Endothelial cell of umbilical vein (primary cell): ENCODE measurements at regions of chr2 and their contacts with region 1.

Region 1: DNA sequence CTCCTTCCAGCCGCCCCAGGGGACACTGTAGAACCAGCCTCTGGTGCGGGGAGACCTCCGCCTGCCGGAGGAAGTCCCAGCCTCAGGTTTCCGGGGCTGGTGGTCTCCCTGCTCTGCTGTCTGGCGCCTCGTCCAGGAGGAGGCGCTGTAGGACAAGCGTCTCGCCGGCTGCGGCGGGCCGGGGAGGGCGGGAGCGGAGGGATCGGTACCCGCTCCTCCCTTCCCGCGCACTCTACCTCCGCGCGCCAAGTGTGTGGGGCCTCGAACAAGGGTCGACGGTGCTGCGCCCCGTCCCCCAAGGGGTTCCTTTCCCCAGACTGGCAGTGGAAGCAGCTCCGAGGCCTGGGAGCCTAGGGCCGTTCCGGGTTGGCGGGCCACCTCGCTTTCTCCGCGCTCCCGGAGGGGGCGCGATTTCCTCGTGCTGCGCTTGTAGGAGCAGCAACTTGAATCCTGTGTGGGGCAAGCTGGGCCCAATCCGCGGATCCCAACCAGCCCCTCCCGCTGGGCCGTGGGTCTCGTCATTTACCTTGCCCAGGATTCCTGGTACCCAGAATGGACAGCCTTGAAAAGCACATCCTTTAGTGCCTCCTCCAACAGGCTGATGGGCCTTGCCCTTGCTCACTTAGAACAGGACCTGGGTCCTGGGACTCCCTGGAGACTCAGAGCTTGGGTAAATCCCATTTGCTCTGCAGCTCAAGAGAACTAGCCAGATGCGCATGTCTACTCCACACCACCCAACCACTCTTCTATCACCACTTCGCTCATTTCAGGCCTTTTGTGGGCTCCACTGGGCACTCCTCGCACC is 10.6 kb upstream of the HOXD4 start:
- DNase-seq: peak; percentile 82
- H3K4me3 ChIP-seq: peak overlapping the region; percentile 16 to 51 (median 39)
- H3K27ac ChIP-seq: peak overlapping the region; percentile 56
- H3K4me1 ChIP-seq: peaks cover 30% of the 10 kb centered on the region
- H3K27me3 ChIP-seq: no peaks in the 10 kb centered on the region
- CTCF ChIP-seq: peak; percentile 80 to 83
- POLR2A ChIP-seq: peak; percentile 58

Region 2: GRCh38 chr2:176178038-176178756 is 37.5 kb after region 1 on chr2:
- CTCF ChIA-PET with region 1: interaction called, 14 read pairs
- POLR2A ChIA-PET with region 1: no interaction called
- dilution Hi-C with region 1: no loop called
- intact Hi-C with region 1: loop called (anchors 2 kb)
- DNase-seq: peak; percentile 68
- H3K4me3 ChIP-seq: peak overlapping the region; percentile 33 to 49 (median 48)
- H3K27ac ChIP-seq: peak overlapping the region; percentile 77
- H3K4me1 ChIP-seq: peaks cover 30% of the 10 kb centered on the region
- H3K27me3 ChIP-seq: no peaks in the 10 kb centered on the region
- CTCF ChIP-seq: no peak
- POLR2A ChIP-seq: no peak

Region 3: GRCh38 chr2:176419591-176420071 is 278.9 kb after region 1 on chr2:
- CTCF ChIA-PET with region 1: interaction called, 5 read pairs
- POLR2A ChIA-PET with region 1: no interaction called
- dilution Hi-C with region 1: no loop called
- intact Hi-C with region 1: loop called (anchors 1 kb)
- DNase-seq: peak; percentile 97
- H3K4me3 ChIP-seq: no peak overlapping the region
- H3K27ac ChIP-seq: peak overlapping the region; percentile 92
- H3K4me1 ChIP-seq: peaks cover 42% of the 10 kb centered on the region
- H3K27me3 ChIP-seq: no peaks in the 10 kb centered on the region
- CTCF ChIP-seq: no peak
- POLR2A ChIP-seq: peak; percentile 65

Region 4: DNA sequence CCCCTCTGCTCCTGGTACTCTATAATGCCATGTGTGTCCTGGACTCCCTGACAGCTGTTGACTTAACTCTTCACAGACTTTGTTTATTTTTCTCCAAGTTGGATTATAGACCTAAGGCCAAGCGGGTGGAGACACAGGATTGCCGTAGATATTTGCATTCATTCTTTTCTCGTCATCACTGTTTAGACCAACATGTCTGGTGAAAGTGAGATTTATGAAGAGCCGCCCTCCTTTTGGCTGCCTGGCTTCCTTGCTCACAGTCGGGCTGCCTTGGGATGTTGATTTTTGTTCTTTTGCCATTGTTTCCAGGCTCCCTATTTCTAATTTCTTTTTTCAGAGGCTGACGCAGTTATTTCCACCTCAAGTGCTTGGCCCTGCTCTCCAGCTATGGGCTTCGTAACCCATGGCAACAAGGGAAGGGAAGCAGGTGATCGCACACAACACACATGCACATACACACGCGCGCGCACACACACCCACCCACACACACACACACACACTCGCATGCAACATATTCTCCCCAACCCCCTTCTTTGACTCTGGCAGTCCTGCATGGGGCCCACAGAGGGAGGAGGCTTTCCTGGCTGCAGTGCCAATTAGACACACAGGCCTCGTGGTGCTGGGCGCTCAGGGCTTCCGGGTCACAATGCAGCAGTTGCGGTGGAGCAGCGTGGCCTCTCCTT is 425.1 kb after region 1 on chr2:
- CTCF ChIA-PET with region 1: interaction called, 13 read pairs
- POLR2A ChIA-PET with region 1: no interaction called
- dilution Hi-C with region 1: no loop called
- intact Hi-C with region 1: no loop called
- DNase-seq: peak; percentile 98
- H3K4me3 ChIP-seq: peak overlapping the region in 1 of 3 experiments; percentile 2
- H3K27ac ChIP-seq: peak overlapping the region; percentile 67
- H3K4me1 ChIP-seq: peaks cover 15% of the 10 kb centered on the region
- H3K27me3 ChIP-seq: no peaks in the 10 kb centered on the region
- CTCF ChIP-seq: no peak
- POLR2A ChIP-seq: no peak

Region 5: GRCh38 chr2:176643646-176644045 is 502.9 kb after region 1 on chr2:
- CTCF ChIA-PET with region 1: interaction called, 140 read pairs
- POLR2A ChIA-PET with region 1: no interaction called
- dilution Hi-C with region 1: loop called (anchors 25 kb)
- intact Hi-C with region 1: loop called (anchors 1 kb)
- DNase-seq: peak; percentile 39
- H3K4me3 ChIP-seq: no peak overlapping the region
- H3K27ac ChIP-seq: no peak overlapping the region
- H3K4me1 ChIP-seq: peaks cover 10% of the 10 kb centered on the region
- H3K27me3 ChIP-seq: no peaks in the 10 kb centered on the region
- CTCF ChIP-seq: no peak
- POLR2A ChIP-seq: no peak